ENCODE measurements at regions of chr1 and their contacts with region 1.

Region 1: DNA sequence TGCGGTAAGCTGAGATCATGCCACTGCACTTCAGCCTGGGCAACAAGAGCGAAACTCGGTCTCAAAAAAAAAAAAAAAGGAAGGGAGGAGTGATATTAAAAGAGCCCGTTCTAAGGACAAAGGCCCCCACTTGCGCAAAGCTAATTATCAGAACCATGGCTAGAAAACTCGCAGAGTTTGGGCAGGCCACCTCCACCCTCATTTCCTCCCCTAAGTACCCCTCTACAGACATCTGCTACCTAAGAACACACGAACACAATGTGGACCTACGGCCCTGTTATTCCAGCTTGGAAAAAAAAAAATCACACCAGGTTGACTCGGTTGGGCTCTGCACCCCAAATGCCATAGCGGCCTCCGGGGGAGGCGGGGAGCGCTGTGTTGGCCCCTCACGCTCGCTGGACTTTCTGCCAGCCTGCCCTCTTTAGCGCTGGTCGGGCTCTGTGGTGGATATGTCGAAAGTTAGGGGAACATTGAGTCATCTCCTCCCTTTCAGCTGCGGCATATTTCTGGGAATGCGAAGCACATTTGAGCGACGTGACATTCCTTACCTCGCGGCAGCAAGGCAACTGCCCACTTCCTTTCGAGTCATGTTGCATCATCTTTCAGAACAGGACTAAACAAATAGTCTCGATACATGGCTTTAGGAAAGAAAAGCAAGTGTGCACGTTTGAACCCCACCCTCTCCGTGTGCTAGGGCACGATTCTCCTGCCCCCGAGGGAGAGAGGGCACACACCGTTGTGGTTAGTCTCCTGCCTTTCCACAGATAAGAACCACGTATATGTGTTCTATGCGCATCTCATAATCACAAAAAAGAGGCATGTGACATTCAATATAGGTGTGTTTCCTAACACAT is 106.1 kb upstream of the SLC45A1 start:
- DNase-seq: peak in 1 of 5 donors; percentile 64
- ATAC-seq: peak; percentile 36 to 86 (median 66)
- H3K4me3 ChIP-seq: peak overlapping the region in 1 of 12 donors; percentile 12
- H3K27ac ChIP-seq: peak overlapping the region in 2 of 12 donors; percentile 24 to 82
- H3K4me1 ChIP-seq: peaks cover 0 to 44% (median 7%) of the 10 kb centered on the region in 12 donors
- H3K27me3 ChIP-seq: peaks cover 0 to 4% (median 0%) of the 10 kb centered on the region in 9 donors
- CTCF ChIP-seq: no peak
- POLR2A ChIP-seq: no peak

Region 2: DNA sequence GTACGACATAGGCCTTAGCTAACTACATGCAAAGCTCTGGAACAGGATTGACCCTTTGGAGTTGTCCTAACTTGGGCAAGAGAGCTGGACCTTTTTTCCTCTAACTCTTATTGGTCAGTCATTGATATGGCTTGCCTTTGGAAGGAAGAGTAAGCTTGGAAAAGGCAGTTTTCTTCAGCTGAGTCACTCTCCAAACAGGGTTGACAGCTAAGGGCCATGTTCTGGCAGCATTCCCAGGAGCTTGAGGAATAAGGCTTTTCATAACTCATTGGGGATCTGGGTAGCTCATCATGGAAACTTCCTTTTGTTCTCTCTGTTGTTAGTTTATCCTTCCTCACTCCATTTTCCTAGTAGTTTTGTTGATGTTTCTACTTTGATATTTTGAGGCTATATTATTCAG is 171.2 kb before region 1 on chr1:
- intact Hi-C with region 1: loop called in 5 of 10 experiments (anchors 10 kb)
- DNase-seq: peak; percentile 65 to 84 (median 76)
- ATAC-seq: peak in 3 of 4 donors; percentile 74 to 92 (median 76)
- H3K4me3 ChIP-seq: no peak overlapping the region
- H3K27ac ChIP-seq: peak overlapping the region in 9 of 12 donors; percentile 5 to 67 (median 49)
- H3K4me1 ChIP-seq: peaks cover 0 to 5% (median 0%) of the 10 kb centered on the region in 12 donors
- H3K27me3 ChIP-seq: no peaks in the 10 kb centered on the region
- CTCF ChIP-seq: no peak
- POLR2A ChIP-seq: no peak

Measured in heart left ventricle (tissue), 16 donors.